Activated CD4-positive, alpha-beta T cell treated with anti-CD3 and anti-CD28 coated beads, Interleukin-2, amount 10 ng/mL, durations not matched to agents 24 days and 14 days (primary cell): ENCODE measurements at regions of chr6 and their contacts with region 1.

Region 1: DNA sequence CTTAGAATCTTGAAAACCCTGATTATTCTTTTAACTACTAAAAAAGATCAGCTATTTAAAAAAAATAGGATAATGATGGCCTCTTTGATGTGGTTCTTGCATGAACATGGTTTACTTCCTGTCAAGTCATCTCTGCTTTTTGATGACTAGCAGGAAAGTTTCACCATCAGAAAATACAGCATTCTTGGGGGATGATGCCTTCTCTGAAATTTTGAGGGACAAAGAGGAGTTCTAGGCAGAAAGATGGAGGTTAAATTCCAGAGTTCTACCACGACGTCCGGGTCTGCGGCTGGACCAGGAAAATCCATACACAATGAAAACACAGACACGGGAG is 130.4 kb downstream of the OLIG3 start:
- DNase-seq: peak; percentile 74
- H3K4me3 Mint-ChIP-seq: peak overlapping the region; percentile 41
- H3K27ac Mint-ChIP-seq: peak overlapping the region; percentile 54
- H3K4me1 Mint-ChIP-seq: peaks cover 19% of the 10 kb centered on the region
- H3K27me3 Mint-ChIP-seq: peaks cover 5% of the 10 kb centered on the region

Region 2: DNA sequence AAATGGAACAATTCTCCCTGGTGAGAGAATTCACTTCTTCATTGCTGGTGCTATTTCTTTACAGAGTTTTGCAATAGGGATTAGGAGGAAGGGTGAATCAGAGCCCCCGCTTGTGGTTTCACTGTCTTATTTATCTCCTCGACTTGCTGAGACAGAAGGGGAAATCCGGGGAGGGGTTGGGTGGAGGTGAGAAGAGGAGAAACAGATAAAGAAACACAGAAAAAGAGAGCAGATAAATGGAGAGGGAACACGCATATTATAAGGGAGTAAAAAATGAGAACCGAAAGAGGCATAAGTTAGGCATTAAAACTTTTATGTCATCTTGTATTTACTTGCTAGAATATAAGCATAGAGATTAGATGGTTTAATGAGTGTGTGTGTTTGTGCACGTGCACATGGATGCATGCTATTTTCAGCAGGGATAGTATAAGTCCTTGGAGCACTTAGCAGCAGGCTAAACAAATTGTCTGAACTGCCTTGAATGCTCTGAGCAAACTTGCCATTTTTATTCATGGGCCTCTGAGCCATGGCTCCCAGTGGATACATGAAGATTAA is 25.5 kb after region 1 on chr6:
- intact Hi-C with region 1: loop called (anchors 1 kb)
- DNase-seq: peak; percentile 90
- H3K4me3 Mint-ChIP-seq: peak overlapping the region; percentile 57
- H3K27ac Mint-ChIP-seq: peak overlapping the region; percentile 77
- H3K4me1 Mint-ChIP-seq: peaks cover 35% of the 10 kb centered on the region
- H3K27me3 Mint-ChIP-seq: no peaks in the 10 kb centered on the region

Region 3: GRCh38 chr6:137399881-137400443 is 36.2 kb after region 1 on chr6:
- intact Hi-C with region 1: loop called (anchors 5 kb)
- DNase-seq: peak; percentile 61
- H3K4me3 Mint-ChIP-seq: no peak overlapping the region
- H3K27ac Mint-ChIP-seq: no peak overlapping the region
- H3K4me1 Mint-ChIP-seq: peaks cover 6% of the 10 kb centered on the region
- H3K27me3 Mint-ChIP-seq: peaks cover 6% of the 10 kb centered on the region